ENCODE measurements at regions of chr6 and their contacts with region 1.

Region 1: DNA sequence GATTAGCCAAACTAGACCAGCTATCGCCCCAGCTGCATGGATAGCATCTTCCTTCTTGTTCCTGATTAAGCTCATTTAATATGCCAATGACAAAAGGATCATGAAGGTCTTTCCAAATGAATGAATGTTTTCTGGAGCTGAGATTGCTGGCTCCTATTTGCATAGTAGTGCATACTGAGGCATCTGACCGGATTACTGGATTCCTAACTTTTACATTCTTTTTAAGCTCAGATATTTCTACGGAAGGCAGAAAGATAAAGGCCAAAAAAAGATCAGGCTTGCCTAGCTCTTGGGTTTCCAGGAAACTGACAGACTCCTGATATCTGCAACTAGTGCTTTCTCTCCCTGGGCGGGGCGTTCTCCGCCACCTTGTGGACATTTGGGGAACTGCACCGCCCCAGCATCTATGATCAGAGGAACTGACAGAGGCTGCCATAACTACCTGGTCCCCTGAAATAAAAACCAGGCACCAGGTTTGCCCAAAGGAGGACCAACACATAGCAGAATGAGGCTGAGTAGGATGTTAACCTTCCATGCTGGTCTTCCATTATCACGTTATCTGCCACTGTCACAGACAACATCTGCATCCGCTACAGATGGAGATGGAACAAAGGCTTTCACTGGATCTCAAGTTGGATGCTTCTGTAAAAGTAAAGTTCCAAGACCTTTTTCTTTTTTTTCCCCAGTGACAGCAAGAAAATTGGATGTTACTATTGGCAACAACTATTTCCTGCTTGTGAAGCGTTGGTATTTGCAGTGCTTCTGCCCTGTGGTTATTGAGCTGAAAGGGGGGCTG is 33.2 kb downstream of the NT5E start:
- DNase-seq: peak; percentile 29 to 87 (median 66)
- ATAC-seq: peak; percentile 91
- H3K4me3 ChIP-seq: no peak overlapping the region
- H3K4me3 Mint-ChIP-seq: peak overlapping the region in 1 of 10 donors; percentile 18
- H3K27ac ChIP-seq: no peak overlapping the region
- H3K27ac Mint-ChIP-seq: peak overlapping the region in 2 of 9 donors; percentile 17 to 60
- H3K4me1 ChIP-seq: no peaks in the 10 kb centered on the region
- H3K4me1 Mint-ChIP-seq: peaks cover 0 to 20% (median 6%) of the 10 kb centered on the region in 7 donors
- H3K27me3 ChIP-seq: no peaks in the 10 kb centered on the region
- H3K27me3 Mint-ChIP-seq: peaks cover 0 to 4% (median 0%) of the 10 kb centered on the region in 5 donors

Region 2: DNA sequence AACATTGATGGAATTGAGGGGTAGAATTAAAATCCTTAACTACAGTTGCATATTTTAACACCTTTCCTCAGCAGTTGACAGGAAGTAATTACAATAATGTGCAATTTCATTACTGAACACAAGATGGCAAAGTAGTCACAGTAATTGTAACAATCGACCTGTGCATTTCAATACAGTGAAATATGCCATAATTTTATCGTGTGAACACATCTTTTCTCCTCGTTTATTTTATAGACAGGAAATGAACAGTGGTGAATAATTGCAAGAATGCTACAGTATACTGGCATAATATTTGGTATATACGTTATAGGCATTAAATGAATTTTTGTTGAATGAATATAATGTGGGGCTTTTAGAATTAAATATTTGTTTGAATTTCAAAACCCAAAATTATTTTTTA is 1598.6 kb before region 1 on chr6:
- CTCF ChIA-PET with region 1: no interaction called
- POLR2A ChIA-PET with region 1: no interaction called
- intact Hi-C with region 1: loop called in 1 of 2 experiments (anchors 1 kb)
- DNase-seq: peak in 6 of 9 donors; percentile 17 to 54 (median 44)
- ATAC-seq: peak; percentile 77
- H3K4me3 ChIP-seq: no peak overlapping the region
- H3K4me3 Mint-ChIP-seq: no peak overlapping the region
- H3K27ac ChIP-seq: no peak overlapping the region
- H3K27ac Mint-ChIP-seq: no peak overlapping the region
- H3K4me1 ChIP-seq: no peaks in the 10 kb centered on the region
- H3K4me1 Mint-ChIP-seq: peaks cover 7 to 55% (median 28%) of the 10 kb centered on the region in 7 donors
- H3K27me3 ChIP-seq: no peaks in the 10 kb centered on the region
- H3K27me3 Mint-ChIP-seq: no peaks in the 10 kb centered on the region

Region 3: DNA sequence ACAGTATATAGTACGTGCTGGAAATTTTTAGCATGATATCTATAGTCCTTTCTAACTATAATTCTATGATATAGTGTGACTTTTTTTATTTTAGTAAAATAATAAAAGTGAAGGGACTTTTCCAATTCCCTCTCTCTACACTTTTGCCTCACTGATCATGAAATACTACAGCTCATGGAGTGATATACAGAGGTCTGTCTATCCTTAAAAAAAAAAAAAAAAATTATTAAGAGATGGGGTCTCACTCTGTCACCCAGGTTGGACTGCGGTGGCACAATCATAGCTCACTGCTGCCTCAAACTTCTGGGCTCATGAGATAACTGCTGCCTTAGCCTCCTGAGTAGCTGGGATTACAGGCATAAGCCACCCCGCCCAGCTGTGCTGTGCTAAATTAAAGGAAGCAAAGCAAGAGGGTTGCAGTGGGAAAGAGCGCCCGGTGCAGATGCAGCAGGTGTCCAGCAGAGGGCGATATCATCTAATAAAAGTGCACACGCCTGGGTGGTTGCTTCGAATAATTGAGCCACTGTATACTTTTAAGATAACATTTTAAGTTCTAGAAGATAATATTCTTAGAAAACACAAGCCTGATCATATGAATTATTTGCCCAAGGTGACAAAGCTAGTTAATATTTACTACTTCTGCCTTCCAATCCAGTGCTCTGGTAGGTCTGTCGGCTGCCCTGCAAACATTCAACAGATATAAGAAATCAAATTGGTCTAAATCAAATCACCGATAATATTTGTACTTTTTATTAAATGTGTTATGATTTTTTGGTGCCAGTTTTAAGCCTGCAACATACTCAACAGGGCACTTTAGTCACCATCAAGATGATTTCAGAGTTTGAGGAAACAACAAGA is 128.1 kb before region 1 on chr6:
- CTCF ChIA-PET with region 1: interaction called, 13 read pairs
- POLR2A ChIA-PET with region 1: no interaction called
- intact Hi-C with region 1: loop called (anchors 1 kb)
- DNase-seq: peak in 8 of 9 donors; percentile 10 to 63 (median 38)
- ATAC-seq: peak; percentile 70
- H3K4me3 ChIP-seq: no peak overlapping the region
- H3K4me3 Mint-ChIP-seq: no peak overlapping the region
- H3K27ac ChIP-seq: no peak overlapping the region
- H3K27ac Mint-ChIP-seq: no peak overlapping the region
- H3K4me1 ChIP-seq: no peaks in the 10 kb centered on the region
- H3K4me1 Mint-ChIP-seq: peaks cover 0 to 3% (median 0%) of the 10 kb centered on the region in 7 donors
- H3K27me3 ChIP-seq: no peaks in the 10 kb centered on the region
- H3K27me3 Mint-ChIP-seq: peaks cover 12 to 21% (median 18%) of the 10 kb centered on the region in 5 donors

Region 4: GRCh38 chr6:85372188-85372914 is 110.8 kb before region 1 on chr6:
- CTCF ChIA-PET with region 1: no interaction called
- POLR2A ChIA-PET with region 1: no interaction called
- intact Hi-C with region 1: loop called in 1 of 2 experiments (anchors 5 kb)
- DNase-seq: peak in 1 of 9 donors; percentile 2
- ATAC-seq: no peak
- H3K4me3 ChIP-seq: no peak overlapping the region
- H3K4me3 Mint-ChIP-seq: no peak overlapping the region
- H3K27ac ChIP-seq: no peak overlapping the region
- H3K27ac Mint-ChIP-seq: no peak overlapping the region
- H3K4me1 ChIP-seq: no peaks in the 10 kb centered on the region
- H3K4me1 Mint-ChIP-seq: peaks cover 0 to 12% (median 0%) of the 10 kb centered on the region in 7 donors
- H3K27me3 ChIP-seq: no peaks in the 10 kb centered on the region
- H3K27me3 Mint-ChIP-seq: peaks cover 0 to 7% (median 1%) of the 10 kb centered on the region in 5 donors

Region 5: GRCh38 chr6:85449818-85450759 is 33.0 kb before region 1 on chr6 and contains the start of gene NT5E:
- CTCF ChIA-PET with region 1: no interaction called
- POLR2A ChIA-PET with region 1: no interaction called
- intact Hi-C with region 1: loop called (anchors 1 to 2 kb)
- DNase-seq: peak in 5 of 9 donors; percentile 17 to 67 (median 30)
- ATAC-seq: peak; percentile 68
- H3K4me3 ChIP-seq: peak within 1 kb of the TSS; percentile 50
- H3K4me3 Mint-ChIP-seq: peak within 1 kb of the TSS; percentile 82 to 98 (median 89)
- H3K27ac ChIP-seq: no peak within 1 kb of the TSS
- H3K27ac Mint-ChIP-seq: peak within 1 kb of the TSS in 8 of 9 donors; percentile 10 to 95 (median 58)
- H3K4me1 ChIP-seq: peaks cover 0 to 9% of the 10 kb centered on the region in 2 donors
- H3K4me1 Mint-ChIP-seq: peaks cover 20 to 65% (median 46%) of the 10 kb centered on the region in 7 donors
- H3K27me3 ChIP-seq: peaks cover 0 to 15% of the 10 kb centered on the region in 2 donors
- H3K27me3 Mint-ChIP-seq: peaks cover 30 to 77% (median 63%) of the 10 kb centered on the region in 5 donors
- total RNA-seq, gene NT5E: 1.5 to 29.3 (median 2.8) TPM

Region 6: DNA sequence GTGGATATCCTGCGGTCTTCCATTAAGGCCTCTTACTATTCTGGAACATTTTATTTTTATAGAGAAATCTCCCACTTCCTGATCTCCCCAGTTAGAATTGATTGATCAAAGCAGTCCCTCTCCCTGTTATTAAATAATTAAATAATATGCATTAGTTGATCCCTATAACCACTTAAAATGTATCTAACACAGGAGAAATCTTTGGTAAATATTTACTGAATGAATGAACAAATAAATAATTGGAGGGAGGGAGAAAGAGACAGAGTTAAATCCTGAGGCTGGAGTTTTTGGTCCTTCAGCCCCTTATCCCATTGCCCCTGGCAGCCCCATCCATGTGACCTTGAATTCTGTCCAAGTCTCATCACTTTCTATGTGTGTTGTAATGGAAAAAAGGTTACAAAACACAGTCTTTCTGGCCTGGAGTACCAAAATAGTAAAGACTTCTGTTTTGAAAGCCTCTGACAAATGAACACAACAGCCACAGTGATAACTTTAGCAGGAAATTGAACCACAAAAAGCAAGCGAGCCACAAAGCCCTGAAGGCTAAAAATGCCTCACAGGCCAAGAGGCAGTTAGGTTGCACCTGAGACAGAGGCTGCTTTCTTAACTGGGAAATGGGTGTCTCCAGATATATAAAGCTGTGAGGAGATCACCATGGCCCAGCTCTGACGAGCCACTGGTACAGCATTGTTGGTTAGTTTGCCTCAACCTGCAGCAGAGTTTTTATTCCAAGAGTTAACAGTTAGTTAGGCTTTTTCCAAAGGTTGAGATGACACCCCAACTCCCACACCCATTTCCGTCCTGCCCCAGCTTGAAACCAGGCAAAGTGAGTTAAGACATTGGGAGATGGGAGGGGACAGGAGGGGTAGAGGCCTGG is 21.9 kb before region 1 on chr6:
- CTCF ChIA-PET with region 1: interaction called, 3 read pairs
- POLR2A ChIA-PET with region 1: no interaction called
- intact Hi-C with region 1: loop called in 1 of 2 experiments (anchors 1 kb)
- DNase-seq: peak in 6 of 9 donors; percentile 17 to 53 (median 46)
- ATAC-seq: peak; percentile 54
- H3K4me3 ChIP-seq: no peak overlapping the region
- H3K4me3 Mint-ChIP-seq: peak overlapping the region in 7 of 10 donors; percentile 32 to 72 (median 68)
- H3K27ac ChIP-seq: no peak overlapping the region
- H3K27ac Mint-ChIP-seq: peak overlapping the region in 8 of 9 donors; percentile 38 to 92 (median 71)
- H3K4me1 ChIP-seq: peaks cover 9 to 25% of the 10 kb centered on the region in 2 donors
- H3K4me1 Mint-ChIP-seq: peaks cover 23 to 95% (median 63%) of the 10 kb centered on the region in 7 donors
- H3K27me3 ChIP-seq: no peaks in the 10 kb centered on the region
- H3K27me3 Mint-ChIP-seq: peaks cover 0 to 30% (median 28%) of the 10 kb centered on the region in 5 donors

Region 7: DNA sequence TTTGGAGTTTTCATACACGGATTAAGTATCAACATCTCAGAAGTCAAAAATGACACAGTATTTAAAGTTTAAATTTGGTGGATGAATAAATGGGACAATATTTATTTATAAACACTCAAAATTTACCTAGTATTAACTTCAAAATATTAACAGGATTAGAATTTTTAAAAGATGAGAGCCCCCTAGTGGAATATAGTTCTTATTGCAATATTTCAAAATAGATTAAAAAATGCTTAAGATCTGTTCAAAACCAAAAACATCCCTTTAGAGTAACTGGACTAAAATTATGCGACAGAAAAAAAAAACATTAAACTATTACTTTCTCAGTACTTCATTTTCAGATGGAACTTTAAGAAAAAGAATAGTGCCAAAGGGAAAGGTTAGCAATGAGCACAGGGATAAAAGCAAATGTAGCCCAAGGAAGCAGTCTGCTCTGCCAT is 54.0 kb after region 1 on chr6:
- CTCF ChIA-PET with region 1: interaction called, 3 read pairs
- POLR2A ChIA-PET with region 1: no interaction called
- intact Hi-C with region 1: loop called in 1 of 2 experiments (anchors 1 kb)
- DNase-seq: peak in 3 of 9 donors; percentile 1 to 15 (median 4)
- ATAC-seq: no peak
- H3K4me3 ChIP-seq: no peak overlapping the region
- H3K4me3 Mint-ChIP-seq: no peak overlapping the region
- H3K27ac ChIP-seq: no peak overlapping the region
- H3K27ac Mint-ChIP-seq: peak overlapping the region in 4 of 9 donors; percentile 25 to 68 (median 54)
- H3K4me1 ChIP-seq: no peaks in the 10 kb centered on the region
- H3K4me1 Mint-ChIP-seq: peaks cover 0 to 4% (median 0%) of the 10 kb centered on the region in 7 donors
- H3K27me3 ChIP-seq: no peaks in the 10 kb centered on the region
- H3K27me3 Mint-ChIP-seq: no peaks in the 10 kb centered on the region